CD8-positive, alpha-beta T cell (primary cell): ENCODE measurements at regions of chr1 and their contacts with region 1.

Region 1: DNA sequence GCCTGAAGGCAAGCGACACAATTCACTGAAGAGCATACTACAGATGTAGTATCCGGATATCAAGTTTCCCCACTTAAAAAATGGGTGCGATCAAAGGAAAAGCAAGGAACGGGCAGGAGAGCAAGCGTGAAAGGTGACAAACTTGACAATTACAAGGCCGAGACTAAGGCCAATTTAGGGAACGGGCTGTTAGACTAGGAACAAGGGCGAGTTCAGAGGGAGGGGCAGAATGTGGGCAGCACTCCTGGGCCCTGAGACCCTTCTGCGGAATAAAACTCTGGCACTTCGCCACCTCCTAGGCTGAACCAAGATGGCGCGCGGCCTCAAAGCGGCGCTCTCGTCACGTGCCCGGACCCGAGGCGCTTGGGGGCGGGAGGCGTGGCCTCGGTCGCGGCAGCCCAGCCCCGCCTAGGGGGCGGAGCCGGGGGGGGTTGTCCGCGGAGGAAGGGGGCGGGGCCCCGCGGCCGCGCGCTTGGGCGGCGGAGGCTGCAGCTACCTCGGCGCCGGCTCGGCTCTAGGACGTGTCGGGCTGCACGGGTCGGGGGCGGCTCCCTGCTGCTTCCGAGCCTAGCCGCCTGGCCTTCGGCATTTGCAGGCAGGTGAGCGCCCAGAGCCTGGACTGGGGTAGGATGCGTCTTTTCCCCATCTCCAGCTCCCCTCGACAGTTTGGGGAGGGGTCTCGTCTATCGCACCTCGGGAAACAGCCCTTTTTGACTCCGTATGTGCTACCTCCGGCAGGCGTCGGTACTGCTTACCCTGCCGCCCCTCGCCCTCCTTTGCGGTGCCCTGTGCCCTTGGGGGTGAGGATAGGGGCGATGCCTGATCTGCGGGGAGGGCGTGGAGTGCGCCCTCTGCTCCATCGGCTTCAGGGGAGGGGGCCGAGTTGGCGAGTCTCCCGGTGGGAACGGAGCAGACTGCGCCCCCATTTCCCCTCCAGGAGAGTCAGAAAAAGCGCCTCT is at the start of gene PPFIA4:
- DNase-seq: peak; percentile 77 to 93 (median 86)
- ATAC-seq: peak; percentile 94
- H3K4me3 ChIP-seq: peak within 1 kb of the TSS; percentile 79 to 98
- H3K4me3 Mint-ChIP-seq: peak within 1 kb of the TSS; percentile 79
- H3K27ac ChIP-seq: peak within 1 kb of the TSS; percentile 46 to 69
- H3K27ac Mint-ChIP-seq: peak within 1 kb of the TSS; percentile 56
- H3K4me1 ChIP-seq: peaks cover 11% of the 10 kb centered on the region
- H3K4me1 Mint-ChIP-seq: peaks cover 8% of the 10 kb centered on the region
- H3K27me3 ChIP-seq: peaks cover 0 to 2% of the 10 kb centered on the region in 2 experiments
- H3K27me3 Mint-ChIP-seq: no peaks in the 10 kb centered on the region
- CTCF ChIP-seq: no peak
- total RNA-seq, gene PPFIA4: 0.33 to 1.1 TPM

Region 2: GRCh38 chr1:202810615-202811295 is 215.6 kb before region 1 on chr1 and contains the start of gene PCAT6:
- CTCF ChIA-PET with region 1: no interaction called
- POLR2A ChIA-PET with region 1: no interaction called
- intact Hi-C with region 1: loop called in 1 of 2 experiments (anchors 5 kb)
- DNase-seq: peak; percentile 67 to 93 (median 84)
- ATAC-seq: peak; percentile 67
- H3K4me3 ChIP-seq: peak within 1 kb of the TSS; percentile 80 to 94
- H3K4me3 Mint-ChIP-seq: peak within 1 kb of the TSS; percentile 88
- H3K27ac ChIP-seq: peak within 1 kb of the TSS; percentile 51 to 72
- H3K27ac Mint-ChIP-seq: peak within 1 kb of the TSS; percentile 90
- H3K4me1 ChIP-seq: peaks cover 20% of the 10 kb centered on the region
- H3K4me1 Mint-ChIP-seq: peaks cover 34% of the 10 kb centered on the region
- H3K27me3 ChIP-seq: no peaks in the 10 kb centered on the region
- H3K27me3 Mint-ChIP-seq: no peaks in the 10 kb centered on the region
- CTCF ChIP-seq: no peak
- total RNA-seq, gene PCAT6: 0.92 to 1.6 TPM

Region 3: DNA sequence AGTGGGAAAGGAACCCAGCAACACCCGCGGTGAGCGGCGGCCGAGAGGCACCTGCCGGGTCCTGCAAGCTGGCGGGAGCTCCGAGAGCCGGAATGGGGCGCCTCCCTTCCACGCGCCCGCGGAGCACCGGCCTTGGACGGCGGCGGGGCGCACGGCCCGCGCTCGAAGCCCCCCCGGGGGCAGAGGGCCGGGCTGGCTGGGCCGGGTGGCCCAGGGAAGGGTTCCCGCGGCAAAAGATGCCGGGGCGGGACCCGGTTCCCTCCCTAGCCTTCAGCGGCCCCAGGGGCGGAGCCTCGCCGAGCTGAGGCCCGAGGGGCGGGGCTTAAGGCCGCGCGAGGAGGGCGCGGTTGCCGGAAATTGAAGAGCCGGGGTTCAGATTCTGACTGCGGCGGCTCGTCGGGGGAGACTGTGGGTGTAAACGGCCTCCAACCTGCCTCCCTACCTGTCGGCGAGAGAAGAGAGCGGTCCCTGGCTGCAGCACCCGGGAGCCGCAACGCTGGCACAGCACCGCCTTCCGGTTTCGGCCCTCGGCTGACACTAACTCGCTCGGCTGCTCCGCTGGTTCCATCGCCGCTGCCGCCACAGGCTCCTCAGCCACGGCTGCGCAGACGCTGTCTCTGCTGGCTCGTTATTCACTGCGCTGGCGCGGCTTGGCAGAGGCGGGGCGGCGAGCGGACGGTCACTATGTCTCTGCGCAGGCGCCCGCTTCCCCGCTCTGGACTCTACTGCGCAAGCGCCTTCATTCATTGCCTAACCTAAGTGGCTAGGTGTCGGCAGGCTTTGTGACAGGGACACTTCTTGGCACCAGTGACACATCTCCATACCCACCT is 137.6 kb before region 1 on chr1 and contains the start of gene RABIF:
- CTCF ChIA-PET with region 1: no interaction called
- POLR2A ChIA-PET with region 1: no interaction called
- intact Hi-C with region 1: loop called in 1 of 2 experiments (anchors 2 kb)
- DNase-seq: peak; percentile 91 to 98 (median 96)
- ATAC-seq: peak; percentile 92
- H3K4me3 ChIP-seq: peak within 1 kb of the TSS; percentile 84 to 97
- H3K4me3 Mint-ChIP-seq: peak within 1 kb of the TSS; percentile 94
- H3K27ac ChIP-seq: peak within 1 kb of the TSS; percentile 92 to 94
- H3K27ac Mint-ChIP-seq: peak within 1 kb of the TSS; percentile 96
- H3K4me1 ChIP-seq: peaks cover 18% of the 10 kb centered on the region
- H3K4me1 Mint-ChIP-seq: peaks cover 30% of the 10 kb centered on the region
- H3K27me3 ChIP-seq: no peaks in the 10 kb centered on the region
- H3K27me3 Mint-ChIP-seq: no peaks in the 10 kb centered on the region
- CTCF ChIP-seq: no peak
- total RNA-seq, gene RABIF: 10.1 to 10.8 TPM

Region 4: GRCh38 chr1:202957733-202958543 is 68.4 kb before region 1 on chr1 and contains the start of gene ADIPOR1:
- CTCF ChIA-PET with region 1: no interaction called
- POLR2A ChIA-PET with region 1: no interaction called
- intact Hi-C with region 1: loop called in 1 of 2 experiments (anchors 5 kb)
- DNase-seq: peak; percentile 89 to 96 (median 94)
- ATAC-seq: peak; percentile 97
- H3K4me3 ChIP-seq: peak within 1 kb of the TSS; percentile 89 to 93
- H3K4me3 Mint-ChIP-seq: peak within 1 kb of the TSS; percentile 81
- H3K27ac ChIP-seq: peak within 1 kb of the TSS; percentile 89 to 94
- H3K27ac Mint-ChIP-seq: peak within 1 kb of the TSS; percentile 92
- H3K4me1 ChIP-seq: peaks cover 36% of the 10 kb centered on the region
- H3K4me1 Mint-ChIP-seq: peaks cover 46% of the 10 kb centered on the region
- H3K27me3 ChIP-seq: no peaks in the 10 kb centered on the region
- H3K27me3 Mint-ChIP-seq: no peaks in the 10 kb centered on the region
- CTCF ChIP-seq: no peak
- total RNA-seq, gene ADIPOR1: 106 to 117 TPM

Region 5: DNA sequence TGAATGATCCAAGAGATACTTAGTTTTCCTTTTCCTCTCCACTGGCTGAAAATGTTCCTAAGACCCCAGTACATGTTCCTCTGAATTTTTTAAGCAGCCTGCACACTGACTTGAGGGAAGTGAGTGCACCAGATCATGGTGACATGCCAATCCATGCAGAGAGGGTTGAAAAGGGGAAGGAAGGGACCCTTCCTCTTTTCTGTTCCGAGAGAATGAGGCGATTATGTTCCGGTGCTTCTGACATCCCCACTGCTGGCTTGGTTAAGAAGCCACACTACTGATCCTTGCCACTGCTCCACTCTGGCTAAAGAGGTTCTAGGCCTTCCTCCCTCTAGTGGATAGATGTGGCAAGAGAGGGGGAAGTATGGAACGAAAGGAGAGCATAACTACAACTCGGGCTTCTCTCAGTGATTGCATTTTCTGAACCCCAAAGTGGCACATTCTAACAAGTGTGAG is 57.4 kb before region 1 on chr1:
- CTCF ChIA-PET with region 1: interaction called, 3 read pairs
- POLR2A ChIA-PET with region 1: no interaction called
- intact Hi-C with region 1: loop called (anchors 1 to 2 kb)
- DNase-seq: peak in 4 of 9 experiments; percentile 14 to 64 (median 40)
- ATAC-seq: peak; percentile 19
- H3K4me3 ChIP-seq: no peak overlapping the region
- H3K4me3 Mint-ChIP-seq: peak overlapping the region; percentile 49
- H3K27ac ChIP-seq: no peak overlapping the region
- H3K27ac Mint-ChIP-seq: no peak overlapping the region
- H3K4me1 ChIP-seq: peaks cover 24% of the 10 kb centered on the region
- H3K4me1 Mint-ChIP-seq: peaks cover 32% of the 10 kb centered on the region
- H3K27me3 ChIP-seq: no peaks in the 10 kb centered on the region
- H3K27me3 Mint-ChIP-seq: no peaks in the 10 kb centered on the region
- CTCF ChIP-seq: peak; percentile 28

Region 6: DNA sequence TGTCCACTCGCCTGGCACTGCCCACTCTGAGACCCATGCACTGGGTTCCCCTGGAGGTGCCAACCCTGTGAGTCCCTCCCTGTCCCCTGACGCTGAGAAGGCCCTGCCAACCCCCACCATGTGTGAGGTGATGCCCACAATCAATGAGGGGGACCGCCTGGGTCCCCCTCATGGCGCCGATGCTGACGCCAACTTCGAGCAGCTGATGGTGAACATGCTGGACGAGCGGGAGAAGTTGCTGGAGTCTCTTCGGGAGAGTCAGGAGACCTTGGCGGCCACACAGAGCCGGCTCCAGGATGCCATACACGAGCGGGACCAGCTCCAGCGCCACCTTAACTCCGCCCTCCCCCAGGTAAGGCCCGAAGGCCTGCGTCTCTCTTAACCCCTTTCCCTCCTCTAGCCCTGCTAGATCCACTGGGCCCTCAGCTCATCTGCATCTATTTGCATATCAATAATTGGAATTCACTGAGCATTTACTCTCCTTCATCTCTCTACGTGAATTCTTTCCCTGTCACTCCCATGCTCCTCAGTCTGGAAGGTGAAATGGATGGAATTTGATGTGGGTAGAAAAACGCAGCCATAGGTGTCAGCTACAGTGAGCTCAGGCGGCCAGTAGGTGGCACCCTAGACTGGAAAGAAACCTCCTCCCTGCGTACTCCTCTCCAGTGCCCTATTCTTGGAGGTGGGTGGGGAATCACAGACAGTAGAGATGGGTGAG is 12.7 kb after region 1 on chr1:
- CTCF ChIA-PET with region 1: interaction called, 15 read pairs
- POLR2A ChIA-PET with region 1: interaction called, 4 read pairs
- intact Hi-C with region 1: no loop called
- DNase-seq: peak; percentile 28 to 74 (median 66)
- ATAC-seq: peak; percentile 94
- H3K4me3 ChIP-seq: no peak overlapping the region
- H3K4me3 Mint-ChIP-seq: no peak overlapping the region
- H3K27ac ChIP-seq: no peak overlapping the region
- H3K27ac Mint-ChIP-seq: no peak overlapping the region
- H3K4me1 ChIP-seq: no peaks in the 10 kb centered on the region
- H3K4me1 Mint-ChIP-seq: peaks cover 2% of the 10 kb centered on the region
- H3K27me3 ChIP-seq: peaks cover 0 to 3% of the 10 kb centered on the region in 2 experiments
- H3K27me3 Mint-ChIP-seq: peaks cover 8% of the 10 kb centered on the region
- CTCF ChIP-seq: peak; percentile 86

Region 7: GRCh38 chr1:203051841-203052324 is 25.6 kb after region 1 on chr1:
- CTCF ChIA-PET with region 1: no interaction called
- POLR2A ChIA-PET with region 1: no interaction called
- intact Hi-C with region 1: no loop called
- DNase-seq: no peak
- ATAC-seq: no peak
- H3K4me3 ChIP-seq: no peak overlapping the region
- H3K4me3 Mint-ChIP-seq: no peak overlapping the region
- H3K27ac ChIP-seq: no peak overlapping the region
- H3K27ac Mint-ChIP-seq: no peak overlapping the region
- H3K4me1 ChIP-seq: no peaks in the 10 kb centered on the region
- H3K4me1 Mint-ChIP-seq: no peaks in the 10 kb centered on the region
- H3K27me3 ChIP-seq: no peaks in the 10 kb centered on the region
- H3K27me3 Mint-ChIP-seq: peaks cover 2% of the 10 kb centered on the region
- CTCF ChIP-seq: no peak

Region 8: DNA sequence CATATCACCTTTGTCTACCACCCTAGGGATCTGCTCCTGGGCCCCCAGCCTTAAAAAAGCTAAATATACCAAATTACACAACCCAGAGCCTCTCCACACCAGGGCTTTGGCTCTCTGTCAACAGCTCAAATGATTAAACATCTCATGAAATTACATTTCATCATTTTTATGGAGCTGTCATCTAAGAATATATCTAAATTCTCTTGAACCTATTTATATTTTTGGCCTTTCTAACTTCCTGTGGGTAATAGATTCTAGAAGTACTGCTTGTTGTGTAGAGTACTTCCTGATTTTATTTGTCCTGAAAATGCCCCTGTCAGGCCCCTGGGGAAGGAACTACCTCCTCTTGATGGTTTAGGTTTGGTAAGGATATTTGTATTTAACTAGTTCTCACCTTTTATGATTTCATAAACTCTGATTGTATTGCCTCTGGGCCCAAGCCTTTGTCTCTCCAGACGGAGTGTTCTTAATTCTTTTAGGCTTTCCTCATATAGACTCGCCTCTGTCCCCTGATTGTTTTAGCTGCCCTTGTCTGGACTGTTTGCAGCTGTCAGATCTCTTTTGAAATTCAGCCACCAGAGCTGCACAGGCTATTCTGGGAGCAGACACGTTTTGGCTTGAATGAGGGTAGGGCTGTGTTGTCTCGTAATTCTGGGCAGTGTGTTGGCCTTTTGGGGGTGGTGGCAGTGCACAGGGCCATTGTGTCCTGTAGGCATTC is 42.9 kb after region 1 on chr1:
- CTCF ChIA-PET with region 1: no interaction called
- POLR2A ChIA-PET with region 1: no interaction called
- intact Hi-C with region 1: no loop called
- DNase-seq: no peak
- ATAC-seq: no peak
- H3K4me3 ChIP-seq: no peak overlapping the region
- H3K4me3 Mint-ChIP-seq: no peak overlapping the region
- H3K27ac ChIP-seq: no peak overlapping the region
- H3K27ac Mint-ChIP-seq: no peak overlapping the region
- H3K4me1 ChIP-seq: no peaks in the 10 kb centered on the region
- H3K4me1 Mint-ChIP-seq: no peaks in the 10 kb centered on the region
- H3K27me3 ChIP-seq: peaks cover 0 to 4% of the 10 kb centered on the region in 2 experiments
- H3K27me3 Mint-ChIP-seq: peaks cover 14% of the 10 kb centered on the region
- CTCF ChIP-seq: no peak

Region 9: GRCh38 chr1:203326830-203327683 is 300.7 kb after region 1 on chr1:
- CTCF ChIA-PET with region 1: no interaction called
- POLR2A ChIA-PET with region 1: no interaction called
- intact Hi-C with region 1: loop called in 1 of 2 experiments (anchors 10 kb)
- DNase-seq: peak; percentile 86 to 97 (median 94)
- ATAC-seq: peak; percentile 67
- H3K4me3 ChIP-seq: peak overlapping the region; percentile 58 to 60
- H3K4me3 Mint-ChIP-seq: peak overlapping the region; percentile 74
- H3K27ac ChIP-seq: peak overlapping the region; percentile 92 to 97
- H3K27ac Mint-ChIP-seq: peak overlapping the region; percentile 93
- H3K4me1 ChIP-seq: peaks cover 65% of the 10 kb centered on the region
- H3K4me1 Mint-ChIP-seq: peaks cover 65% of the 10 kb centered on the region
- H3K27me3 ChIP-seq: no peaks in the 10 kb centered on the region
- H3K27me3 Mint-ChIP-seq: no peaks in the 10 kb centered on the region
- CTCF ChIP-seq: no peak

Region 10: GRCh38 chr1:203475012-203475981 is 449.0 kb after region 1 on chr1 and contains the start of gene PRELP:
- CTCF ChIA-PET with region 1: no interaction called
- POLR2A ChIA-PET with region 1: no interaction called
- intact Hi-C with region 1: no loop called
- DNase-seq: no peak
- ATAC-seq: no peak
- H3K4me3 ChIP-seq: no peak within 1 kb of the TSS
- H3K4me3 Mint-ChIP-seq: no peak within 1 kb of the TSS
- H3K27ac ChIP-seq: no peak within 1 kb of the TSS
- H3K27ac Mint-ChIP-seq: no peak within 1 kb of the TSS
- H3K4me1 ChIP-seq: no peaks in the 10 kb centered on the region
- H3K4me1 Mint-ChIP-seq: no peaks in the 10 kb centered on the region
- H3K27me3 ChIP-seq: no peaks in the 10 kb centered on the region
- H3K27me3 Mint-ChIP-seq: peaks cover 22% of the 10 kb centered on the region
- CTCF ChIP-seq: no peak
- total RNA-seq, gene PRELP: not detected